ENCODE measurements at regions of chr6 and their contacts with region 1.

Region 1: DNA sequence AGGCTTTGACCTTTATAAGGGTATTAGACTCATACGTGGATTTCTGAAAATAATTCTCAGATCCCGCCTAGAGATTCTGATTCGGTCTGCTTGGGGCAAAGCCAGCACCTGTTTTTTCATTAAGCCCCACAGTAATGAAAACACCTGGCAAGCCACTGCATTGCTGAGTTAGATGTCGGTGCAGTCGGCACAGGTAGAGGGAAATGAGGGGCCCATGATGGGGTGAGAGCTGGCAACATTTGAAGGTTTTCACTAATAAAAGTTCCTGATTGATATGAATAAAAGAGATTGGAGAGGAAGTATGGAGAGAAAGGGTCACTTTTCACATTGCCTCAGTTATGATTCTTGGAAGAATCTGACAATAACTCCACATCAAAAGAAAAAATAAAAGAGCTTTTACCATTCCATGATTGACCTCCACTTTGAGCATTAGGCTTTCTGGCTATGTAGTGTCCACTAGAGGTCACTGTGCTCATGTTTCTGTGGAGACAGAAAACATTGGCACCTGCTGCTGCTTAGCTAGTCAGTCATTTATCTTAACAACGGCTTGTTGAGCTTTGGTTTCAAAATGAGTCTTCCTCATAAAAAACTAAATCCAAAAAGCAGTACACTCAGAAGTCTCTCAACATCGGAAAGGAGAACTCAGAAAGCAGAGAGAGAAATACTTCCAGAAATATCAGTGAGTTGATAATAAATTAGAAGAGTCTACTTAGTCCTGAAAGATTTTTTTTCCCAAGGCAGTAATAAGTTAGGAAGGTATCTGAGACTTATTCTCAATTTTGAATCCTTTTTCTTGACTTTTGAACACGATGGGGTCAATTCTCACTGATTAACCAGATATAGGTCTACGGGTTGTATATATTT is 53.3 kb upstream of the KLHL31 start:
- DNase-seq: no peak
- H3K4me3 ChIP-seq: no peak overlapping the region
- H3K27me3 ChIP-seq: peaks cover 14% of the 10 kb centered on the region
- CTCF ChIP-seq: peak; percentile 86

Region 2: DNA sequence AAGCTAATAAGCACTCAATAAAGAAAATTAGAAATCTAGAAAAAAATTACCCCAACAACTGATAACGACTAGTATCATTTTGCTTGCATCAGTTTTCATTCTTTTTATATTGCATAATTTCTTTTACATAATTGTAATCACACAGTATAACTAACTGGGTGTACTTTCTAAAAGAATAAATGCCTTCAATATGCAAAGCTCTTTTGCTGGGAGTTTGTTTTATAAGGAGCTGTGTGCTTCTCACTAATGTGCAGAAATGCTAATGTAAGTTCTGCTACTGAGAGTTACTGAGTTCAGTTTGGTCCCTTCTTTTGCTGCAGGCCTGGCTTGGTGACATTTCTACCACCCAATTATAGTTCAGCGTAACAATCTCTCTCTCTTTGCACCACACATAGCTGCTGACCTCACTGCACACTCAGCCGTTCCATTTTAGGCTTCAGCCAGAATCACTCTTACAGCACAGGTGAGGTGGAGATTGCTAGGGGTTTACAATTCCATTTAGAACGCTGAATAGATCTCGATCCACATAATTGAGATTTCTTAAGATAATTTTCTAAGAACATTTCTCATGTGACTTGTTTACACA is 32.4 kb before region 1 on chr6:
- CTCF ChIA-PET with region 1: interaction called, 10 read pairs
- POLR2A ChIA-PET with region 1: no interaction called
- DNase-seq: no peak
- H3K4me3 ChIP-seq: no peak overlapping the region
- H3K27me3 ChIP-seq: peaks cover 1% of the 10 kb centered on the region; the same call in 1 of the 2 replicates
- CTCF ChIP-seq: no peak

Region 3: DNA sequence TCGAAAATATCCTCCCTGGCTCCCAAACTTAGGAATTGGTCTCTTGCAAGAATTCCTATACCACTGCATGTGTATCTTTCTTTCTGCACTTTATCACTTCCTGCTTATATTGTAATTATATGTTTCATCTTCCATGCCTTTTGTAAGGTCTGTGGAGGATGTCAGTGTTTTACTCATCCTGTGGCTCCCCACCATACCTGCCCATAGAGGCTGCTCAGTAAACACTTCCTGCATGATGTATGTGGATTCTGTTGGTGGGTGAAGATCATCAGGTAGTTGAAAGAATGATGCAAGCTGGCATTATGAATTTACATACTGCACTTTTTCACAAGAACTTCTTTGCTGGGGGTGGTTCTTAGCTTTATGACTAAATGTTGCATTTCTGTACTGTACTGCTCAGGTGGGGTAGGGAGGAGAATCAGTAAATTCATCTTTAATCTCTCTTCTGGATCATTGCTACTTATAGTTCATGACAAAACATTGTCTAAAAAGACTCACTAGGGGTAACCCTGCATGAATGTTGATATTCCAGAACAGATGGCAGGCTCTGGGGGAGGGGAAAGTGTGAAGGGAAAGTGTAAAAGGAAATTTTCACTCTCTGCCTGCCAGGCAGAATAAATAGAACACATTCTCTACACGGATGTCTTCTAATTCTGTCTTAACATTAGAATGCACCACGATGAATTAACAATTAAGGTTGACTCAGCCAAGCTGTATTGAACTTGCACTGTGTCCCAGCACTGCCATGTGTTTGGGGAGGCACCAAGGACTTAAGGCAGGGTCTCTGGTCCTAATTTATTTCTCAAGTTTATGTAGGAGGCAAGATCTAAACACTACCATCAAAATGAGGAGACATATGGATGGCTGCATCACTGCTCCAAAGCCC is 17.3 kb before region 1 on chr6:
- CTCF ChIA-PET with region 1: interaction called, 80 read pairs
- POLR2A ChIA-PET with region 1: no interaction called
- DNase-seq: no peak
- H3K4me3 ChIP-seq: no peak overlapping the region
- H3K27me3 ChIP-seq: peaks cover 5% of the 10 kb centered on the region
- CTCF ChIP-seq: no peak

Region 4: DNA sequence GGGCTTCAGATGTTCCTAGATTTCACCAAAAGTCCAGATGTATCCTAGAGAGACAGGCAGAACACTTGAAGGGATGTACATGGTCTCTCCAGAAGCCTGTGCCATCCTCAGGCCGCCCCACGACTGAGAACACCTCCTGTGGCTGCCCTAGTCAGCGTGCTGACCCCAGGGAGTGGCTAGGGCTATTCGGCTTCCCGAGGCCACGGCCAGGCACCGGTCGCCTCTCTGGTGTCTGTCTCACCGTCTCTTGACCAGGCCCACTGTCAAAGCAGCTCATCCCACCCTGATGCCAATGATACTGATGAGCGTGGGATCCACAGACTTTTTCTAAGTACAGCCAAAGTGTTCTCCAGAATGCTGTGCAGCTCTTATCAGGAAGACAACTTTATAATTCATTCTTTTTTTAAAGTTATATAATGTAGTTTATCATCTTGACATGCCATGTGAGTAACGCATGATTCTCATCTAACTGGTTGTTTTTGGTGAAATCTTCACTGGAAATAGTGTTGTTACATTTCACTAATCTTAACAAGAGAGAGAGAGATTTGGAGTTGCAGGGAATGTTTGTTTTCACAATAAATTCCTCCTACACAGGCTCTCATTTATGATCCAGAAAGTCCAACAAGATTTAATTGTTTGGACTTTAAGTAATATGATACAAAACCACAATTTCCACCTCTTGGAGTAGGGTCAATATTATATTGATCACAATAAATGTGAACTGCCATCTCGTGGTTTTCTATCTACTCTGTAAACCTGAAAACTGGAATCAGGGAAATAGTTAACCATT is 11.5 kb before region 1 on chr6:
- CTCF ChIA-PET with region 1: interaction called, 80 read pairs
- POLR2A ChIA-PET with region 1: no interaction called
- DNase-seq: no peak
- H3K4me3 ChIP-seq: no peak overlapping the region
- H3K27me3 ChIP-seq: peaks cover 7% of the 10 kb centered on the region
- CTCF ChIP-seq: no peak

Region 5: GRCh38 chr6:53761036-53761435 is 42.2 kb after region 1 on chr6:
- CTCF ChIA-PET with region 1: no interaction called
- POLR2A ChIA-PET with region 1: no interaction called
- DNase-seq: no peak
- H3K4me3 ChIP-seq: no peak overlapping the region
- H3K27me3 ChIP-seq: no peaks in the 10 kb centered on the region
- CTCF ChIP-seq: no peak